H1 (cell line): ENCODE measurements at regions of chr5 and their contacts with region 1.

Region 1: GRCh38 chr5:159133041-159133741 is 33.5 kb upstream of the EBF1 start:
- DNase-seq: no peak
- H3K4me3 ChIP-seq: no peak overlapping the region
- H3K27ac ChIP-seq: no peak overlapping the region
- H3K4me1 ChIP-seq: no peaks in the 10 kb centered on the region
- H3K27me3 ChIP-seq: no peaks in the 10 kb centered on the region
- CTCF ChIP-seq: peak in 2 of 3 experiments; percentile 46 to 48; a peak in 3 of 4 replicates
- EP300 ChIP-seq: no peak
- POLR2A ChIP-seq: no peak
- RAD21 ChIP-seq: peak; percentile 80 to 81

Region 2: DNA sequence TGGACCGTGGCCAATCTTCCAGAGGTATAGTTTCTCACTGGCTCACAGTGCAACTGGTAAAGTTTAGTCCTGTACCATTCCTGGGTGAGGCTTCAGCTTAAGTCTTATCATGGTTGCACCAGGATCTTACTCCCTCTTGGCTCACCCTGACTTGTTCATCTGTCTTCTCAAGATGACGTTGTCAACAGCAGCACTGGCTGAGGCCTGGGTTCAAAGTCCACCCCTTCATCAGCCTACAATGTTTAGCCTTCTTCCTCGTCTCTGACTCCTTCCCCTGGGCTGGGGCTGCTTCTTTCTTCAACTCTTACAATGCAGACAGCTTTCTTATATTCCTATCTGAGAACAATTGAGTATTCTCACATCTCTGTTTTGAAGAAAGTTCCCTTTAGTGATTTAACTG is 963.1 kb before region 1 on chr5:
- CTCF ChIA-PET with region 1: interaction called, 15 read pairs
- POLR2A ChIA-PET with region 1: no interaction called
- DNase-seq: no peak
- H3K4me3 ChIP-seq: no peak overlapping the region
- H3K27ac ChIP-seq: no peak overlapping the region
- H3K4me1 ChIP-seq: peaks cover 0 to under 1% (median 0%) of the 10 kb centered on the region in 4 experiments; a peak in 1 of 7 replicates
- H3K27me3 ChIP-seq: peaks cover 0 to 2% (median 0%) of the 10 kb centered on the region in 4 experiments; a peak in 1 of 7 replicates
- CTCF ChIP-seq: no peak
- EP300 ChIP-seq: no peak
- POLR2A ChIP-seq: no peak
- RAD21 ChIP-seq: no peak

Region 3: GRCh38 chr5:159156426-159157238 is 23.4 kb after region 1 on chr5:
- CTCF ChIA-PET with region 1: no interaction called
- POLR2A ChIA-PET with region 1: no interaction called
- DNase-seq: no peak
- H3K4me3 ChIP-seq: no peak overlapping the region
- H3K27ac ChIP-seq: no peak overlapping the region
- H3K4me1 ChIP-seq: no peaks in the 10 kb centered on the region
- H3K27me3 ChIP-seq: no peaks in the 10 kb centered on the region
- CTCF ChIP-seq: peak in 2 of 3 experiments; percentile 64 to 75; a peak in 3 of 4 replicates
- EP300 ChIP-seq: no peak
- POLR2A ChIP-seq: no peak
- RAD21 ChIP-seq: peak; percentile 85 to 88

Region 4: GRCh38 chr5:159171274-159171673 is 38.1 kb after region 1 on chr5:
- CTCF ChIA-PET with region 1: no interaction called
- POLR2A ChIA-PET with region 1: no interaction called
- DNase-seq: no peak
- H3K4me3 ChIP-seq: no peak overlapping the region
- H3K27ac ChIP-seq: no peak overlapping the region
- H3K4me1 ChIP-seq: no peaks in the 10 kb centered on the region
- H3K27me3 ChIP-seq: no peaks in the 10 kb centered on the region
- CTCF ChIP-seq: no peak
- EP300 ChIP-seq: no peak
- POLR2A ChIP-seq: no peak
- RAD21 ChIP-seq: no peak